ENCODE measurements at regions of chr12 and their contacts with region 1.

Region 1: DNA sequence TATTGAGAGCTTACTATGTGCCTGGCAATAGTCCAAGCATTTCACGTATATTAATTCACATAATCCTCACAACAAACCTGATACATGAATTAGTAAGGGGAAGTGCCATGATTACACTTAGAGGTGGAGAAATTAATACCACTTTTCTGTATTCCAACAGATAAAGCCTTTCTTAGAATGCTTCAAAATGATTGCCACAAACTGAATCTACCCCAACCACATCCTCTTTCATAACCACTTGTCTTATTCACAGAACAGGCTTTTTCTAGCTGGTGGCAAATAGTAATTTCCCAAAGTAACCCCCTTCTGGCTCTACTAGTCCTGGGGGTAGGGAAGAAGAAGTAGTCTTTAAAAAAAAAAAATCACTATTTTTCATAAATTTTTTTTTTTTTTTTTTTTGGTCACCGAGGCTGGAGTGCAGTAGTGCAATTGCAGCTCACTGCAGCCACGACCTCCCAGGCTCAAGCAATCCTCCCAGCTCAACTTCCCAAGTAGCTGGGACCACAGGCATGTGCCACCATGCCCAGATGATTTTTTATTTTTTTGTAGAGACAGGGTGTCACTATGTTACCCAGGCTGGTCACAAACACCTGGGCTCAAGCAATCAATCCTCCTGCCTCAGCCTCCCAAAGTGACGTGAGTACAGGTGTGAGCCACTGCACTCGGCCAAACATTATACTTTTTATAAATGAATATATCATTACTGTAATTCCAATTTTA is 59.0 kb upstream of the ARID2 start:
- DNase-seq: no peak
- H3K4me3 Mint-ChIP-seq: peak overlapping the region; percentile 19
- H3K27ac Mint-ChIP-seq: peak overlapping the region; percentile 55
- H3K4me1 Mint-ChIP-seq: peaks cover 39% of the 10 kb centered on the region
- H3K27me3 Mint-ChIP-seq: peaks cover 14% of the 10 kb centered on the region

Region 2: DNA sequence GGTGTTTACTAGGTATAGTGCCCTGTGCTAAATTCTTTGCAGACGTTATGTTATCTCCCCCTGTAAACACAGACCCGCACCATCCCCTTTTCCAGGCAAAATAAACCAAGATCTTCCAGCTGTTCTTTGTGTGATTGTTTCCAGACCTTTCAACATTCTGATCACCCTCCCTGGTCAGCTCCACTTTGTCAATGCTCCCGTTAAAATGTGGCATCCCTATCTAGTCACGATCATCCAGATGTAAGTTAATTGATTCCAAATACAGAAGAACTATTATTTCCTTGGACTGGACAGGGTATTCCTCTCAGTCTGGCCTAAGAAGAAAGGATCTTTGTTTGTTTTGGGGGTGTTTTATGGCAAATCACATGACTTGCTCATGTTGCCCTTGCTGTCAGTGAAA is 68.6 kb before region 1 on chr12:
- CTCF ChIA-PET with region 1: no interaction called
- POLR2A ChIA-PET with region 1: no interaction called
- DNase-seq: no peak
- H3K4me3 Mint-ChIP-seq: no peak overlapping the region
- H3K27ac Mint-ChIP-seq: no peak overlapping the region
- H3K4me1 Mint-ChIP-seq: no peaks in the 10 kb centered on the region
- H3K27me3 Mint-ChIP-seq: peaks cover 3% of the 10 kb centered on the region

Region 3: DNA sequence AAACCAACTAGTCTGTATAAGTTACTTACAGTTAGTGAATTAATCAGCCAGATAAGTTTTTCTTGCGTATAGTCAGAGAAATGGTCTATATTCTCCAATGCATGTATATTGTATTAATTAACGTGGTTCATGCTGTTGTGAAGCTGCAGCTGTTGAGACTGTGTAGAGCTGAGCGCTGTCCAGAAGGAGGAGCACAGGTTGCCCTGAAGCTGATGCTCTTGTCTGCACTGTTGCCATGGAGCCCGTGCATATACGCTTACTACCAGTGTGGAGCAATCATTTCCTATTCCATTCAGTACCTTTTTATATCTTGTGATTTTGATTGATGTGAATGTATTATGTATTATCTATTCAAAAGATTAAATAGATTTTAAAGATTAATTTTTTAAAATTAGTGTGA is 15.3 kb before region 1 on chr12:
- CTCF ChIA-PET with region 1: interaction called, 6 read pairs
- POLR2A ChIA-PET with region 1: interaction called, 14 read pairs
- DNase-seq: peak; percentile 52
- H3K4me3 Mint-ChIP-seq: no peak overlapping the region
- H3K27ac Mint-ChIP-seq: no peak overlapping the region
- H3K4me1 Mint-ChIP-seq: no peaks in the 10 kb centered on the region
- H3K27me3 Mint-ChIP-seq: peaks cover 32% of the 10 kb centered on the region

Region 4: GRCh38 chr12:45713078-45713477 is 42.6 kb after region 1 on chr12:
- CTCF ChIA-PET with region 1: no interaction called
- POLR2A ChIA-PET with region 1: no interaction called
- DNase-seq: no peak
- H3K4me3 Mint-ChIP-seq: no peak overlapping the region
- H3K27ac Mint-ChIP-seq: no peak overlapping the region
- H3K4me1 Mint-ChIP-seq: no peaks in the 10 kb centered on the region
- H3K27me3 Mint-ChIP-seq: no peaks in the 10 kb centered on the region

Measured in activated CD4-positive, alpha-beta memory T cell treated with anti-CD3 and anti-CD28 coated beads, Interleukin-2, amount 10 ng/mL, durations not matched to agents 7 days and 5 days (primary cell).